AG04450 (cell line): ENCODE measurements at regions of chr2 and their contacts with region 1.

Region 1: GRCh38 chr2:108169982-108170625 is 69.7 kb upstream of the SULT1C3 start:
- DNase-seq: no peak
- H3K4me3 ChIP-seq: no peak overlapping the region
- H3K27ac ChIP-seq: no peak overlapping the region
- H3K27me3 ChIP-seq: no peaks in the 10 kb centered on the region
- CTCF ChIP-seq: peak; percentile 57

Region 2: GRCh38 chr2:106638043-106638442 is 1532.1 kb before region 1 on chr2:
- CTCF ChIA-PET with region 1: interaction called, 19 read pairs
- POLR2A ChIA-PET with region 1: no interaction called
- DNase-seq: no peak
- H3K4me3 ChIP-seq: no peak overlapping the region
- H3K27ac ChIP-seq: no peak overlapping the region
- H3K27me3 ChIP-seq: no peaks in the 10 kb centered on the region
- CTCF ChIP-seq: peak; percentile 29